Psoas muscle (tissue), 8 donors: ENCODE measurements at regions of chr7 and their contacts with region 1.

Region 1: GRCh38 chr7:158767707-158768106 is 61.6 kb downstream of the ESYT2 start:
- DNase-seq: no peak
- ATAC-seq: no peak
- H3K4me3 ChIP-seq: no peak overlapping the region
- H3K27ac ChIP-seq: no peak overlapping the region
- H3K4me1 ChIP-seq: no peaks in the 10 kb centered on the region
- H3K27me3 ChIP-seq: no peaks in the 10 kb centered on the region
- CTCF ChIP-seq: no peak

Region 2: GRCh38 chr7:158704704-158705468 is 62.8 kb before region 1 on chr7 and contains the start of gene NCAPG2:
- intact Hi-C with region 1: no loop called
- DNase-seq: peak; percentile 99 to 100
- ATAC-seq: peak; percentile 99 to 100 (median 99)
- H3K4me3 ChIP-seq: peak within 1 kb of the TSS; percentile 98
- H3K27ac ChIP-seq: peak within 1 kb of the TSS; percentile 84
- H3K4me1 ChIP-seq: peaks cover 4% of the 10 kb centered on the region
- H3K27me3 ChIP-seq: no peaks in the 10 kb centered on the region
- CTCF ChIP-seq: peak; percentile 36
- total RNA-seq, gene NCAPG2: 2.2 to 3.8 (median 3.2) TPM

Region 3: DNA sequence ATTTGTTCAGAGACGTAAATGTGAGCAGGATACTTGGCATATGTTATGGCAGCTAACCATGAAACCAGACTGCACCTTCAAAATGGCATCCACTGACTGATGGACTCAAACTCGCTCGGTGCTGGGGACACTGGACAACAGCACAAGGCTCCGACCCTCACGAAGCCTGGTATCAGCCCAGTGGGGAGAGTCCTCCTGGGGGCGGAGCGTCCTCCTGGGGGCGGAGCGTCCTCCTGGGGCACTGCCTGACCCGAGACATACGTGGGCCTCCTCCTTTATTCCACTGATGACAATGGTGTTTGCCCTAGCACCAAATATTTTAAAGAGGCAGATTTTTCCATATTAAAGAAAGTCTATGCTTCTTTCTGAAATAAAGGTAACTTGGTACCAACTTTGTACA is 22.1 kb after region 1 on chr7:
- intact Hi-C with region 1: loop called in 1 of 2 experiments (anchors 2 kb)
- DNase-seq: no peak
- ATAC-seq: no peak
- H3K4me3 ChIP-seq: no peak overlapping the region
- H3K27ac ChIP-seq: no peak overlapping the region
- H3K4me1 ChIP-seq: no peaks in the 10 kb centered on the region
- H3K27me3 ChIP-seq: no peaks in the 10 kb centered on the region
- CTCF ChIP-seq: no peak

Region 4: DNA sequence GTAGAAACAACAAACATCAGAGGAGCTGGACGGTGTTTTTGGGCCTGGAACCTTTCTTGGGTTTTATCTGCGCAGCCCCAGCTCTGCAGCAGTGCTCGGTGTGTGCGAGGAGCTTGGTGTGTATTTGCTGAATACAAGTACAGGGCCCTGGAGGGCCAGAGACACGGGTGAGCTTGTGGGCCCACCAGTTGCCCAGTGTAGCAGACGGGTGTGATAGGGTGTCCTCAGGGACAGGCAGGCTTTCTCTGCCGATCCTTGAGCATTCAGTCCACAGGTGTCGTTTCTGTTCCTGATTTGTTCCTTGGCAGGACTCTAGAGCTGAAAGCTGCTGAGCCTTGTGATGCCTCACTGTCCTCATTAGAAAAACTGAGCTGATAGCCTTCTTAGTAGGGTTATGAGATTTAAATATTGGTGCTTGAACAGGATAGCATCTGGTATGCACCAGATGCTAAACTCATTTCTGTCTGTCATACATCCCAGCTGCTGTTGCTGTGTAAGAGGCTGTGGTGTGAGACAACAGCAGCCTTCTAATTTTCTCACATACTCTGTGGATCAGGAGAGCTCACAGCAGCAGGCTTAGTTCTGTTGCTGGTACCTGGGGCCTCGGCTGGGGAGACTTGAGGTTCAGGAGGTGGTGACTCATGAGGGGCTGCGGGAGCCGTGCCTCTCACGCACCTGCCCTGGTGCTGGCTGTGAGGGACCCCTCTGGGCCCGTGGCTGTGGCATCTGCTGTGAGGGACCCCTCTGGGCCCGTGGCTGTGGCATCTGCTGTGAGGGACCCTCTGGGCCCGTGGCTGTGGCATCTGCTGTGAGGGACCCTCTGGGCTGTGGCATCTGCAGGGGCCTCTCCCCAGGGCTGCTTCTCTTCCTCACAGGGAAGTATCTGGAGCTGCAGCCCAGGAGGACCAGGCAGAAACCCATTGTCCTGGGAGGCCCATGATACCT is 101.0 kb after region 1 on chr7:
- intact Hi-C with region 1: no loop called
- DNase-seq: no peak
- ATAC-seq: no peak
- H3K4me3 ChIP-seq: no peak overlapping the region
- H3K27ac ChIP-seq: peak overlapping the region; percentile 53
- H3K4me1 ChIP-seq: peaks cover 12% of the 10 kb centered on the region
- H3K27me3 ChIP-seq: no peaks in the 10 kb centered on the region
- CTCF ChIP-seq: no peak